Endothelial cell of umbilical vein (primary cell): ENCODE measurements at regions of chr15 and their contacts with region 1.

Region 1: GRCh38 chr15:96356494-96357455 is 26.3 kb downstream of the NR2F2 start:
- DNase-seq: peak; percentile 88
- H3K4me3 ChIP-seq: peak overlapping the region; percentile 46 to 81 (median 65)
- H3K27ac ChIP-seq: peak overlapping the region; percentile 76
- H3K4me1 ChIP-seq: peaks cover 71% of the 10 kb centered on the region
- H3K27me3 ChIP-seq: no peaks in the 10 kb centered on the region
- CTCF ChIP-seq: peak; percentile 94 to 98
- POLR2A ChIP-seq: no peak

Region 2: DNA sequence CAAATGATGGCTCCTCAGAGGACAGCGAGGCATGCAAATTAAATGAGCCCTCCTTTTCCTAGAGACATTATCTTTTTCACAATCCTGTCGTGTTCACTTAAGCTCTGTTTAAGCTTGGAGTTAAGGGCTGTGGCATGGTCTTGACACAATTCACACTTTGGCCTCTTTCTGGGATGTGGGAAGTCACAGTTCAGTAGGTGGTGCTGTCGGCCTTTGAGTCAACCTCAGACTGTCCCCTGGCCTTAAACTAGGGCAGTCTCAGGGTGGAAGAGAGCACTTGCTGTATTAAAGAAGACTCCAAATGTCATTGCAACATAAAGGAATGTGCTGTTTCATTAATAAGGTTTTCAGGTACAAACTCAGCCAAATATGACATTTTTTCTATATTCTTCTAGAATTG is 1774.4 kb before region 1 on chr15:
- CTCF ChIA-PET with region 1: interaction called, 6 read pairs
- POLR2A ChIA-PET with region 1: no interaction called
- dilution Hi-C with region 1: no loop called
- intact Hi-C with region 1: loop called (anchors 2 kb)
- DNase-seq: peak; percentile 85
- H3K4me3 ChIP-seq: no peak overlapping the region
- H3K27ac ChIP-seq: no peak overlapping the region
- H3K4me1 ChIP-seq: peaks cover 25% of the 10 kb centered on the region
- H3K27me3 ChIP-seq: no peaks in the 10 kb centered on the region
- CTCF ChIP-seq: peak; percentile 75 to 80
- POLR2A ChIP-seq: no peak

Region 3: GRCh38 chr15:96303503-96304056 is 53.2 kb before region 1 on chr15:
- CTCF ChIA-PET with region 1: no interaction called
- POLR2A ChIA-PET with region 1: no interaction called
- dilution Hi-C with region 1: no loop called
- intact Hi-C with region 1: no loop called
- DNase-seq: no peak
- H3K4me3 ChIP-seq: no peak overlapping the region
- H3K27ac ChIP-seq: no peak overlapping the region
- H3K4me1 ChIP-seq: no peaks in the 10 kb centered on the region
- H3K27me3 ChIP-seq: no peaks in the 10 kb centered on the region
- CTCF ChIP-seq: no peak
- POLR2A ChIP-seq: no peak

Region 4: GRCh38 chr15:96367311-96368200 is 10.8 kb after region 1 on chr15:
- CTCF ChIA-PET with region 1: interaction called, 11 read pairs
- POLR2A ChIA-PET with region 1: interaction called, 6 read pairs
- dilution Hi-C with region 1: no loop called
- intact Hi-C with region 1: loop called (anchors 1 kb)
- DNase-seq: peak; percentile 30
- H3K4me3 ChIP-seq: peak overlapping the region; percentile 15 to 57 (median 21)
- H3K27ac ChIP-seq: no peak overlapping the region
- H3K4me1 ChIP-seq: peaks cover 7% of the 10 kb centered on the region
- H3K27me3 ChIP-seq: no peaks in the 10 kb centered on the region
- CTCF ChIP-seq: no peak
- POLR2A ChIP-seq: no peak

Region 5: GRCh38 chr15:96585484-96586386 is 229.0 kb after region 1 on chr15:
- CTCF ChIA-PET with region 1: interaction called, 11 read pairs
- POLR2A ChIA-PET with region 1: no interaction called
- dilution Hi-C with region 1: no loop called
- intact Hi-C with region 1: loop called (anchors 1 kb)
- DNase-seq: peak; percentile 39
- H3K4me3 ChIP-seq: no peak overlapping the region
- H3K27ac ChIP-seq: no peak overlapping the region
- H3K4me1 ChIP-seq: no peaks in the 10 kb centered on the region
- H3K27me3 ChIP-seq: peaks cover 0 to 2% of the 10 kb centered on the region in 2 experiments
- CTCF ChIP-seq: peak in 1 of 2 donors; percentile 33
- POLR2A ChIP-seq: no peak

Region 6: GRCh38 chr15:96992817-96993216 is 636.0 kb after region 1 on chr15:
- CTCF ChIA-PET with region 1: no interaction called
- POLR2A ChIA-PET with region 1: no interaction called
- dilution Hi-C with region 1: no loop called
- intact Hi-C with region 1: loop called (anchors 5 kb)
- DNase-seq: peak; percentile 87
- H3K4me3 ChIP-seq: no peak overlapping the region
- H3K27ac ChIP-seq: peak overlapping the region; percentile 86
- H3K4me1 ChIP-seq: peaks cover 28% of the 10 kb centered on the region
- H3K27me3 ChIP-seq: no peaks in the 10 kb centered on the region
- CTCF ChIP-seq: no peak
- POLR2A ChIP-seq: peak; percentile 55

Region 7: DNA sequence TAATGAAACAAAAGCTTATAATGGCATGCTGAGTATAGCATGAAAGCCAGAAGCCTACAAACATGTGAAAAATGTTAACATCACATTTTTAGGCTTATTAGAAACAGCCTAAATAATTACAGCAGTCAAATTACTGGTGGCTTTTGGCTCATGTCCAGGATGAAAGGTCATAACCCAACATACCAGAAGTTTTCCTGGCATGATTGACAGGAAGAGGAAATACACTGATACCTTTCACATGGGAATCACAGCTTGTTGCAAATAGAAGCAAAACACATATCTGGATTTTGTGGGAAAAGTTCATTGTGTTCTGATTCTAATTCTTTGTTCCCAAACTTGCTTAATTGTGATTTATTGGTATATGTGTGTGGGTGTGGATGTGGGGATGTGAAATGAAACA is 1210.2 kb after region 1 on chr15:
- CTCF ChIA-PET with region 1: no interaction called
- POLR2A ChIA-PET with region 1: no interaction called
- dilution Hi-C with region 1: no loop called
- intact Hi-C with region 1: loop called (anchors 10 kb)
- DNase-seq: peak; percentile 97
- H3K4me3 ChIP-seq: no peak overlapping the region
- H3K27ac ChIP-seq: peak overlapping the region; percentile 42
- H3K4me1 ChIP-seq: peaks cover 18% of the 10 kb centered on the region
- H3K27me3 ChIP-seq: no peaks in the 10 kb centered on the region
- CTCF ChIP-seq: no peak
- POLR2A ChIP-seq: no peak